ENCODE measurements at regions of chr5 and their contacts with region 1.

Region 1: DNA sequence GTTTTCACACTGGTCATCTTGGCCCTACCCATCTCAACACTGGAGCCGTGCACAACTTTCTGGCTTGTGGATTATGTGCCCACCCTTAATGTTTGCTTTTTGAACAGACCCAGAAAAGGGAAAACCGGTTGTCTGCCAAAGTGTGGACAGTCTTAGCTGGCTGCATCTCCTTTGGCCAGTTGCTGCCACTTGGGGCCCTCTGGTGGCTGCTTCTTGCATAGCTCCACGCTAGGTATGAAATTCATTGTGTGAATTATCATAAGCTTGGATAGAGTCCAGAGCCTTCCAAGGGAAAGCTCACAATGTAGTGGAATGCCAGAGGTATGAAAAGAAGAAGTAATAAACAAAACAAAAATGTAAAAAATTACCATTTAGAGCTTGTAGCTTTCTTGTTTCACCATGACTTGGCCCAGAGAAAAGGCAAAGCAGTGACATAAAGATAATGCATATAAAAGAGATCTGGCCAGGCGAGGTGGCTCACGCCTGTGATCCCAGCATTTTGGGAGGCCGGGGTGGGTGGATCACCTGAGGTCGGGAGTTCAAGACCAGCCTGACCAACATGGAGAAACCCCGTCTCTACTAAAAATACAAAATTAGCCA is 12.5 kb upstream of the SLC36A3 start:
- DNase-seq: peak; percentile 17
- H3K4me3 Mint-ChIP-seq: no peak overlapping the region
- H3K27ac Mint-ChIP-seq: no peak overlapping the region
- H3K4me1 Mint-ChIP-seq: no peaks in the 10 kb centered on the region
- H3K27me3 Mint-ChIP-seq: peaks cover 10% of the 10 kb centered on the region

Region 2: DNA sequence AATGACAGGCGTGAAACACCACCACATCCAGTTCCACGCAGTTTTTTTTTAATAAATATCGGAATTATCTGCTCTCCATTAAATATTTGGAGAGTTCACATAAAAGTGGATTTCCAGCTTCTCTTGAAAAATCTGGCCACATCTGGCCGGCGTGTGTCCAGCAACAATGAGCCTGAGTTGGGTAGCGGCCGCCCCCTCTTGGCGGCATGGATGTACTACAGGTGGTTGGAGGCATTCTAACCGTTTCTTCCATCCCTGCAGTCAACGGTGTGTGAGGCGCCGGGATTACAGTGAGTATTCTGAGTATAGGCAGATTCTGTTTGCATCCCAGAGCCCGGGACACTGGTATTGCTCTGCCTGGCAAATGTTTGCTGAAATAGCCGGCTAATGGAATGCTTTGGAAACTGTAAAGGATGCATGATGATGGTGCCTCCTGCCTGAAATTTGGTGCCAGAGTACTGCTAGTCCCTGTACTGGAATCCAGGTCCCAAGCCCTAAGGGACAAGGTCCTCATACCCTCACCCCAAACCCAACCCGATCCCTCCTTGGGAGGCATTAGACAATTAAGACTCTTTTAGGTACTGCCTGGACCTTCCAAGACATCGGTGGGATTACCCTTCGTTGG is 76.7 kb before region 1 on chr5:
- intact Hi-C with region 1: loop called (anchors 5 kb)
- DNase-seq: no peak
- H3K4me3 Mint-ChIP-seq: no peak overlapping the region
- H3K27ac Mint-ChIP-seq: no peak overlapping the region
- H3K4me1 Mint-ChIP-seq: peaks cover 41% of the 10 kb centered on the region
- H3K27me3 Mint-ChIP-seq: no peaks in the 10 kb centered on the region